AG04449 (cell line): ENCODE measurements at regions of chr13 and their contacts with region 1.

Region 1: GRCh38 chr13:51435002-51435578 is 17.7 kb downstream of the INTS6 start:
- DNase-seq: no peak
- H3K4me3 ChIP-seq: no peak overlapping the region
- CTCF ChIP-seq: peak; percentile 28

Region 2: DNA sequence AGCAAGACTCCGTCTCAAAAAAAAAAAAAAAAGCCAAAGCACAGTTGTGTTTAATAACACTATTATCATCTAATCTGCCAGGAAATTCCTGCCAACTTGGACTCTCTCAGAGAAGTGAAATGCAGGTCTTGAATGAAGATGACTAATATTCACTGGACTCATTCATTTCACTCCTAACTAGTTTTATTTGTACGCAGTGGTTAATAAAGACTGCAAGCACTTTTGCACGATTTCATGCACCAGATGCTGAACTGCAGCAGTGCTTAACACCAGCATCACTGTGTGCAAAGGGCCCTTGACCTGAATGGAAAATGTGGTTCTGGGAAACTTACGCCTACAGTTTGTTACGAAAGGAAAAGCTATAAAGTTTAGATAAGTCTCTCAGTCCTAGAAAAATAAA is 305.6 kb after region 1 on chr13:
- CTCF ChIA-PET with region 1: interaction called, 10 read pairs
- POLR2A ChIA-PET with region 1: no interaction called
- DNase-seq: no peak
- H3K4me3 ChIP-seq: no peak overlapping the region
- CTCF ChIP-seq: no peak

Region 3: DNA sequence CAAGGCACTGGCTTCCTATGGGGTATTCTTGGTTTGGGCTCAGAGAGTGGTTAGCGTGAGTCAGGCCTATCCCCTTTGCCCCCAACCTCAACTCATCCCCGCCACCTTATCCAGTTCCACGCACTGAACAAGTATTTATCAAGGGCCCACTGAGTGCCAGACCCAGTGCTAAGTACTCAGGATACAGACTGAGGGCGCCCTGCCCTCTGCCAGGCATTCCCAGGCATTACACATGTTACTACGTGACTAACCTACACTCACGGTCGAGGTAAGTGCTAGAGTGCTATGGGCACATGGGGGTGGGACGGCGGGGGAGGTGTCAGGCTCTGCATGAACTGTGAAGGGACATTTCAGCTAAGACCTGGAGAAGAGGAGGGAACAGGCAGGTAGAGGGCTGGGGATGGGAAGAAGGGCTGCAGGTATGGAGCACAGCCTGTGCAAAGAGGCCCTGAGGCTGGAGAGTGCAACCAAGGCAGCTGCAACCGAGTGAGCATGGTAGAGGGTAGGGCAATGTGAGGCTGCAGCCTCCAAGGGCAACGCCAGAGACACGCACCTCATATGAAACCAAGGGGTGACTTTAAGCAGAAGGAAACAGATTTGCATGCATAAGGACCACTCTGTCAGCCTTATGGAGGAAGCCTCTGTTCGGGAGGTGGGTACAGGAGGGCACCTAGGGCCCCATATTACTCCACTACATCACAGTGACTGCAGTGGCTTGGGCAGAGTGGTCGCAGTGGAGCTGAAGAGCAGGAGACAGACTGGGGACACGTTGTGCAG is 346.3 kb after region 1 on chr13:
- CTCF ChIA-PET with region 1: interaction called, 15 read pairs
- POLR2A ChIA-PET with region 1: no interaction called
- DNase-seq: no peak
- H3K4me3 ChIP-seq: no peak overlapping the region
- CTCF ChIP-seq: peak; percentile 50

Region 4: DNA sequence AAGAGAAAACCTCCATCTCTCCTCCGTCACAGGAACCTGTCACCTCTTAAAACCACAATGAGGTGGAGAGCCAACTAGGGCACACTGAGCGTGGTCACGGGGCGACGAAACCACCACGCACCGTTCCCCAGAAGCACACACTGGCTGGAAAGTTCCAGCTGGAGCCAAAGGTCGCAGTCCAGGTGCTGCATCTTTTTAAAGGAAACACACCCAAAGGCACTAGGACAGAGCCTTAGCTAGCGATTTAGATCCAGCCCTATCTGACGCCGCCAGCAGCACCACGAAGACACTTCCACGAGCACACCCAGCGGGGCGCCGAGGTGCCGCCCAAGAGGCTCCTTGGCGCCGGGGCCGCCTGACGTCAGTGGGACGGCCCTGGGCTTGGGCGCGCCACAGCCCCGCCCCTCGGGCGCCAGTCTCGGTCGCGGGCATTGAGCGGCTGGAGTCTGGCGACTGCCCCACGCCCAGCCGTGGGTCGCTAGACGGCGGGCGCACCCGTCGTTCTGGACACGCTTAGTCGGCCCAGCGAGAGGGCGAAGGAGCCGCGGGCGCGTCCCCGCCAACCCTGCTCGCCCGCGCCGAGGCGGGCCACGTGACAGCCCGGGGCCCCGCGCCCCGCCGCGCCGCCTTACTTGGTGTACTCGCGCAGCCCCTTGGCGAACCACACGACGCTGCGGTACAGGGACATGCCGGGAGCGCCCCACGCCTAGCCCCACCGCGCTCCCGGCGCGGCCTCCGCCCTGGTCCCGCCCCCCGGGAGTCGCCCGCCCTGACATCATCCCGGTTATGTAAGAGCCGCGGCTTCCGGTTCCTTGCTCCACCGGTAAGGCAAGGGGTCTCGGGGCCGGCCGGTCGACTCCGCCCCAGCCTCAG is 368.6 kb after region 1 on chr13 and contains the start of gene DHRS12:
- CTCF ChIA-PET with region 1: interaction called, 96 read pairs
- POLR2A ChIA-PET with region 1: no interaction called
- DNase-seq: no peak
- H3K4me3 ChIP-seq: peak within 1 kb of the TSS; percentile 74
- CTCF ChIP-seq: no peak